WTC11 (cell line): ENCODE measurements at regions of chr17 and their contacts with region 1.

Region 1: DNA sequence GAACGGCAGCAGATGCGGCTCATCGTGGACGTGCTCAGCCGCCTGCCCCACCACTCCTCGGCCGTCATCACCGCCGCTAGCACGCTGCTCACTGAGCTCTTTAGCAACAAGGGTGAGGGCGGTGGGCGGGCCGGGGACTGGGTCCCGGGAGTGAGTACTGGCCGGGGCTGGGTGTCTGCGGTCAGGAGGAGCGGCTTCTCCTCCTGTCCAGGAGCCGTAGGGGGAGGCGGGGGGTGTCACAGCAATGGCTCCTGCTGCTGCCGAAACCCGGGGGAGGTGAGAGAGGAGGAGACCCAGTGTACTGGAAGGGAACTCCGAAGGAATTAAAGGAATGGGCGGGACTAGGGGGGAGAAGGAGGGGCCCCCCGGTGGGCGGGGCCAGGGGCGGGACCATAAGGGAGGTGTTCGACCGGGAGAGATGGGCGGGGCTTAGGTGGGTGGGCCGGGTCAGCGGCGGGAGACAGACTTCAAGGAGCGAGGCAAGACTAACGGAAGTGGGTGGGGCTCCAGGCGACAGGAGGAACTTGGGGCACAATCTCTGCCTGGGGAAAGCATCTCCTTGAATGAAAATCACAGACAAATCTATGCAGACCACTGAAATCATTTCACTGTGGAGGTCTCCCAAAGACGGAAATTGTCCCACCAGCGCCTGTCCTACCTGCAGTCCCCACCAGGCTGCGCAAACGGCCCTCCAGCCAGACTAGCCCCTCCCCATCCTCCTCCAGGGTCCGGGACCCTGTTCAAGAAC is 2.4 kb downstream of the NAGS start:
- DNase-seq: peak; percentile 100
- ATAC-seq: peak; percentile 62
- H3K4me3 Mint-ChIP-seq: peak overlapping the region; percentile 92
- H3K27ac Mint-ChIP-seq: peak overlapping the region; percentile 83
- H3K4me1 Mint-ChIP-seq: peaks cover 17% of the 10 kb centered on the region
- H3K27me3 Mint-ChIP-seq: peaks cover 23% of the 10 kb centered on the region
- CTCF ChIP-seq: peak; percentile 50

Region 2: GRCh38 chr17:43946069-43946696 is 60.6 kb before region 1 on chr17:
- CTCF ChIA-PET with region 1: interaction called, 74 read pairs
- POLR2A ChIA-PET with region 1: interaction called, 4 read pairs
- DNase-seq: peak; percentile 66
- ATAC-seq: peak; percentile 55
- H3K4me3 Mint-ChIP-seq: no peak overlapping the region
- H3K27ac Mint-ChIP-seq: no peak overlapping the region
- H3K4me1 Mint-ChIP-seq: peaks cover 16% of the 10 kb centered on the region
- H3K27me3 Mint-ChIP-seq: peaks cover 12% of the 10 kb centered on the region
- CTCF ChIP-seq: no peak

Region 3: GRCh38 chr17:43994272-43995149 is 12.3 kb before region 1 on chr17:
- CTCF ChIA-PET with region 1: interaction called, 11 read pairs
- POLR2A ChIA-PET with region 1: interaction called, 3 read pairs
- DNase-seq: peak; percentile 85
- ATAC-seq: peak; percentile 86
- H3K4me3 Mint-ChIP-seq: peak overlapping the region; percentile 59
- H3K27ac Mint-ChIP-seq: no peak overlapping the region
- H3K4me1 Mint-ChIP-seq: peaks cover 8% of the 10 kb centered on the region
- H3K27me3 Mint-ChIP-seq: peaks cover 13% of the 10 kb centered on the region; the same call in 1 of the 2 replicates
- CTCF ChIP-seq: peak; percentile 92

Region 4: GRCh38 chr17:44110823-44111633 is 104.3 kb after region 1 on chr17:
- CTCF ChIA-PET with region 1: interaction called, 27 read pairs
- POLR2A ChIA-PET with region 1: no interaction called
- DNase-seq: peak; percentile 82
- ATAC-seq: peak; percentile 75
- H3K4me3 Mint-ChIP-seq: peak overlapping the region; percentile 49
- H3K27ac Mint-ChIP-seq: no peak overlapping the region
- H3K4me1 Mint-ChIP-seq: peaks cover 48% of the 10 kb centered on the region
- H3K27me3 Mint-ChIP-seq: no peaks in the 10 kb centered on the region
- CTCF ChIP-seq: no peak